Activated CD8-positive, alpha-beta T cell treated with anti-CD3 and anti-CD28 coated beads, Interleukin-2, amount 10 ng/mL, durations not matched to agents 7 days and 5 days (primary cell): ENCODE measurements at regions of chrX and their contacts with region 1.

Region 1: GRCh38 chrX:150547375-150548115 is 20.9 kb upstream of the MTM1 start:
- DNase-seq: no peak
- ATAC-seq: peak; percentile 46
- H3K4me3 Mint-ChIP-seq: peak overlapping the region; percentile 15
- H3K27ac Mint-ChIP-seq: peak overlapping the region; percentile 89
- H3K4me1 Mint-ChIP-seq: peaks cover 42% of the 10 kb centered on the region
- H3K27me3 Mint-ChIP-seq: no peaks in the 10 kb centered on the region

Region 2: GRCh38 chrX:150429594-150429993 is 118.0 kb before region 1 on chrX:
- CTCF ChIA-PET with region 1: no interaction called
- POLR2A ChIA-PET with region 1: no interaction called
- DNase-seq: no peak
- ATAC-seq: no peak
- H3K4me3 Mint-ChIP-seq: no peak overlapping the region
- H3K27ac Mint-ChIP-seq: no peak overlapping the region
- H3K4me1 Mint-ChIP-seq: no peaks in the 10 kb centered on the region
- H3K27me3 Mint-ChIP-seq: peaks cover 6% of the 10 kb centered on the region

Region 3: GRCh38 chrX:150536455-150537116 is 11.0 kb before region 1 on chrX:
- CTCF ChIA-PET with region 1: no interaction called
- POLR2A ChIA-PET with region 1: no interaction called
- DNase-seq: no peak
- ATAC-seq: no peak
- H3K4me3 Mint-ChIP-seq: no peak overlapping the region
- H3K27ac Mint-ChIP-seq: no peak overlapping the region
- H3K4me1 Mint-ChIP-seq: no peaks in the 10 kb centered on the region
- H3K27me3 Mint-ChIP-seq: no peaks in the 10 kb centered on the region

Region 4: GRCh38 chrX:150568320-150569154 is 21.0 kb after region 1 on chrX and contains the start of gene MTM1:
- CTCF ChIA-PET with region 1: interaction called, 26 read pairs
- POLR2A ChIA-PET with region 1: interaction called, 6 read pairs
- DNase-seq: peak; percentile 94
- ATAC-seq: peak; percentile 93
- H3K4me3 Mint-ChIP-seq: peak within 1 kb of the TSS; percentile 83
- H3K27ac Mint-ChIP-seq: peak within 1 kb of the TSS; percentile 87
- H3K4me1 Mint-ChIP-seq: peaks cover 39% of the 10 kb centered on the region
- H3K27me3 Mint-ChIP-seq: no peaks in the 10 kb centered on the region
- total RNA-seq, gene MTM1: 28.7 to 34.8 TPM

Region 5: GRCh38 chrX:150587585-150588503 is 40.3 kb after region 1 on chrX:
- CTCF ChIA-PET with region 1: interaction called, 18 read pairs
- POLR2A ChIA-PET with region 1: no interaction called
- DNase-seq: peak; percentile 58
- ATAC-seq: no peak
- H3K4me3 Mint-ChIP-seq: no peak overlapping the region
- H3K27ac Mint-ChIP-seq: no peak overlapping the region
- H3K4me1 Mint-ChIP-seq: peaks cover 10% of the 10 kb centered on the region
- H3K27me3 Mint-ChIP-seq: no peaks in the 10 kb centered on the region